ENCODE measurements at regions of chr7 and their contacts with region 1.

Region 1: GRCh38 chr7:152336754-152337368 is 98.9 kb downstream of the KMT2C start:
- DNase-seq: peak; percentile 37
- H3K4me3 ChIP-seq: no peak overlapping the region
- H3K27ac ChIP-seq: no peak overlapping the region
- H3K4me1 ChIP-seq: no peaks in the 10 kb centered on the region
- H3K27me3 ChIP-seq: no peaks in the 10 kb centered on the region
- CTCF ChIP-seq: peak; percentile 54

Region 2: GRCh38 chr7:152292898-152293297 is 44.0 kb before region 1 on chr7:
- CTCF ChIA-PET with region 1: no interaction called
- dilution Hi-C with region 1: no loop called
- in situ Hi-C with region 1: no loop called
- intact Hi-C with region 1: no loop called
- DNase-seq: no peak
- H3K4me3 ChIP-seq: no peak overlapping the region
- H3K27ac ChIP-seq: no peak overlapping the region
- H3K4me1 ChIP-seq: no peaks in the 10 kb centered on the region
- H3K27me3 ChIP-seq: no peaks in the 10 kb centered on the region
- CTCF ChIP-seq: no peak

Region 3: DNA sequence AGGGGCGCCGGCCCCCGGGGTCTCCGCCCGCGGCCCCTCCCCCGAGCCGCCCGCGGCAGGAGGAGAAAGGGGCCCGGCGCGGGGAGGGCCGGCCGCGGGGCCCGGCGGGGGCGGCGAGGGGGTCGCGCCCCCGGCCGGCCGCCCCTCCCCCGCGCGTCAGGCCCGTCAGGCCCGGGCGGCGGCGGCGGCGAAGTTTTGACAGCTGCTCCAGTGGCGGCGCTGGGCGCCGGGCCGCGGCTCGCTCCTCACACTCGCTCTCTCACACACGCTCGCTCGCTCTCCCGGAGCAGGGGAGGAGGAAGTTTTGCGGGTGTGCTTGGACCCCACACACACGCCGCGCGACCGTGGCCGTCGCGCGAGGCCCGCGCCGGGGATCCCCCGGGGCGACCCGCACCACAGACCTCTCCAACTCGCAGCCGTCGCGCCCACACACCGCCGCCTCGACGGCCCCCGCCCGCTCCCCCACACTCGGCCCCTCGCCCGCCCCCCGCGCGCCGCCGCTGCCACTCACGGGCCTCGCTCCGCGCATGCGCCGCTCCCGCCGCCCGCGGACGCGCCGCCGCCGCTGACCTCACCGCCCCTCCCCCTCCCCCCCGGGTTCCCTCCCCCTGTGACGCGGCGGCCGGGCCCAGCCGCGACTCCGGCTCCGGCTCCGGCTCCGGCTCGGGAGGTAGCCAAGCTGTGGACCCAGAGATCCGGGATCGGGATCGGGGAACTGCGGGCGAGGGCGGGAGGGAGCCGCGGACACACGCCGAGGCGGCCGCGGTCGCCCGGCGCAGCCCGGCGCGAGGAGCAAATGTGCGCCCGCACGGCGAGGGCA is 99.5 kb after region 1 on chr7:
- CTCF ChIA-PET with region 1: no interaction called
- dilution Hi-C with region 1: no loop called
- in situ Hi-C with region 1: no loop called
- intact Hi-C with region 1: loop called (anchors 1 kb)
- DNase-seq: peak; percentile 91
- H3K4me3 ChIP-seq: peak overlapping the region; percentile 56 to 71 (median 67)
- H3K27ac ChIP-seq: peak overlapping the region; percentile 74
- H3K4me1 ChIP-seq: peaks cover 2% of the 10 kb centered on the region
- H3K27me3 ChIP-seq: no peaks in the 10 kb centered on the region
- CTCF ChIP-seq: no peak

Region 4: DNA sequence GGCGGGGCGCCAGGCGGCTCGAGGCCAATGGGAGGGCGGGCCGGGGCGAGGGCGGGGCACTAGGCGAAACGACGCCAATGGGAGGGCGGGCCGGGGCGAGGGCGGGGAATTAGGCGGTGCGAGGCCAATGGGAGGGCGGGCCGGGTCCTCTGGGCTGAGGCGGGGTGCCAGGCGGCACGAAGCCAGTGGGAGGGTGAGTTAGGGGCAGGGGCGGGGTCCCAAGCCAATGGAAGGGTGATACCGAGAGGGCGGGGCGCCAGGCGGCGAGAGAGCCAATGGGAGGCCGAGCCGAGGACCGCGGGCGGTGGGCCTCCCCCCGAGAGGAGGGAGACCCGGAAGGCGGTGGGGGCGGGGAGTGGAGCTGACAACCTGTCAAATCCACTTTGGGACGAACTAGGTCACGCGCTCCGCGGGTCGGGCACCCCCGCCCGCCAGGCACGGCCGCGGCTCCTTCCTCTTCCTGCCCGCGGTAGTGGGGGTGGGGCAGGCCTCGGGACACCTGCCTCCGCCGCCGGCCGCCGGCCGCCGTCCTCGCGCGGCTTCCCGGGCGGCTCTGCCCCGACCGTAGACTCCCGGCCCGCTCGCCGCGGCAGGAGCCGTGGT is 126.9 kb after region 1 on chr7:
- CTCF ChIA-PET with region 1: no interaction called
- dilution Hi-C with region 1: no loop called
- in situ Hi-C with region 1: no loop called
- intact Hi-C with region 1: loop called (anchors 2 kb)
- DNase-seq: peak; percentile 99
- H3K4me3 ChIP-seq: peak overlapping the region; percentile 87 to 90 (median 89)
- H3K27ac ChIP-seq: peak overlapping the region; percentile 50
- H3K4me1 ChIP-seq: peaks cover 5% of the 10 kb centered on the region
- H3K27me3 ChIP-seq: no peaks in the 10 kb centered on the region
- CTCF ChIP-seq: no peak

Region 5: GRCh38 chr7:152615031-152615741 is 278.3 kb after region 1 on chr7:
- CTCF ChIA-PET with region 1: no interaction called
- dilution Hi-C with region 1: no loop called
- in situ Hi-C with region 1: no loop called
- intact Hi-C with region 1: no loop called
- DNase-seq: no peak
- H3K4me3 ChIP-seq: no peak overlapping the region
- H3K27ac ChIP-seq: no peak overlapping the region
- H3K4me1 ChIP-seq: no peaks in the 10 kb centered on the region
- H3K27me3 ChIP-seq: no peaks in the 10 kb centered on the region
- CTCF ChIP-seq: no peak

Region 6: GRCh38 chr7:152675759-152676636 is 339.1 kb after region 1 on chr7 and contains the start of gene XRCC2:
- CTCF ChIA-PET with region 1: no interaction called
- dilution Hi-C with region 1: no loop called
- in situ Hi-C with region 1: no loop called
- intact Hi-C with region 1: loop called (anchors 10 kb)
- DNase-seq: peak; percentile 89
- H3K4me3 ChIP-seq: peak within 1 kb of the TSS; percentile 72 to 100 (median 94)
- H3K27ac ChIP-seq: peak within 1 kb of the TSS; percentile 91
- H3K4me1 ChIP-seq: peaks cover 5% of the 10 kb centered on the region
- H3K27me3 ChIP-seq: no peaks in the 10 kb centered on the region
- CTCF ChIP-seq: no peak
- total RNA-seq, gene XRCC2: 1.2 to 7.6 TPM

Region 7: GRCh38 chr7:152709287-152710152 is 372.7 kb after region 1 on chr7:
- CTCF ChIA-PET with region 1: interaction called, 5 read pairs
- dilution Hi-C with region 1: no loop called
- in situ Hi-C with region 1: loop called (anchors 10 to 25 kb)
- intact Hi-C with region 1: loop called (anchors 1 kb)
- DNase-seq: peak; percentile 64
- H3K4me3 ChIP-seq: no peak overlapping the region
- H3K27ac ChIP-seq: no peak overlapping the region
- H3K4me1 ChIP-seq: no peaks in the 10 kb centered on the region
- H3K27me3 ChIP-seq: no peaks in the 10 kb centered on the region
- CTCF ChIP-seq: no peak

Region 8: DNA sequence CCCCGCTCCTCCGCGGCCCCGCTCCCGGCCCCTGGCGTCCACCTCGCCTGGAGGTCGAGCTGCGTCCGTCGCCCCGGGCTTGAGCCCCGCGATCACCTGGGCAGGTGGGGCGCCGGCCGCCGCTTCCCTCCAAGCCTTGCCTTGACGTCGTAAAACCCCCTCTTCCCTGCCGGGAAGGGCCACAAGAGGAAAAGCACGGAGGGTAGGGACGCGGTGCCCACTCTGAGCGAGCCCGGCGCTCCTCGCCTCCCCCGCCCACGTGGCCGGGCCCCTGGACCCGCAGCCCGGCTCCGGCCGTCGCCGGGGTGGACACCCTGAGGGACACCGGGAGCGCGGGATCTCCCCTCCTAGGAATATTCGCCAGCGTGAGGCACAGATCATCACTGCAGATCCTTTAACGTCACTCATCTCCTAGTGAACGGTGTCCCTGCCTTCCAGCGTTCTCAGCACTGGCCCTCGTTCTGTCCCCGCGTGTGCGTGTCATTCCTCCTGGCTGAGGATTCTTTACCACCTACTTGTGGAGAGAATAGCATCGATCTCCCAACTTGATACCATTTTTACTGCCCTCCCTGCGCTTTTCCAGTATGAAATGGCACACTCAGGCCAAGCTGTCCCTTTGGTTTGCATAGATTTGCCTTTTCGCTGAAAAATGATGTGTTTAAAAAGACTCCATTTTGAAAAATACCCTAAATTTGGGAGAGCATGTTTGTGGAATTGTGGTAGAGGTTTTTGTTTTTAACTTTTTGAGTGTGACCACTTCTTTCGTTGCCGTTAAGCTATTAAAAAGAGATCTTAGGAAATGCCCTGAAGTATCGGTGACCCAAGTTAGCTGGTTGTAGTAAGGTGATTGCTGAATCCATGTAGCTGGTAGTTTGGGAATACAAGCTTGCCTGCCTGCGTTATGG is 423.3 kb after region 1 on chr7:
- CTCF ChIA-PET with region 1: no interaction called
- dilution Hi-C with region 1: no loop called
- in situ Hi-C with region 1: no loop called
- intact Hi-C with region 1: loop called (anchors 5 kb)
- DNase-seq: peak; percentile 26
- H3K4me3 ChIP-seq: peak overlapping the region; percentile 72 to 96 (median 90)
- H3K27ac ChIP-seq: peak overlapping the region; percentile 72
- H3K4me1 ChIP-seq: peaks cover 19% of the 10 kb centered on the region
- H3K27me3 ChIP-seq: no peaks in the 10 kb centered on the region
- CTCF ChIP-seq: no peak